ENCODE measurements at regions of chr2 and their contacts with region 1.

Region 1: GRCh38 chr2:88669371-88670214 is 21.9 kb upstream of the RPIA start:
- DNase-seq: peak; percentile 31
- ATAC-seq: peak; percentile 74
- H3K4me3 ChIP-seq: no peak overlapping the region
- H3K27ac ChIP-seq: no peak overlapping the region
- H3K4me1 ChIP-seq: peaks cover 9 to 11% of the 10 kb centered on the region in 2 experiments
- H3K27me3 ChIP-seq: no peaks in the 10 kb centered on the region
- CTCF ChIP-seq: peak; percentile 67 to 76 (median 69)
- POLR2A ChIP-seq: no peak
- RAD21 ChIP-seq: peak; percentile 83

Region 2: DNA sequence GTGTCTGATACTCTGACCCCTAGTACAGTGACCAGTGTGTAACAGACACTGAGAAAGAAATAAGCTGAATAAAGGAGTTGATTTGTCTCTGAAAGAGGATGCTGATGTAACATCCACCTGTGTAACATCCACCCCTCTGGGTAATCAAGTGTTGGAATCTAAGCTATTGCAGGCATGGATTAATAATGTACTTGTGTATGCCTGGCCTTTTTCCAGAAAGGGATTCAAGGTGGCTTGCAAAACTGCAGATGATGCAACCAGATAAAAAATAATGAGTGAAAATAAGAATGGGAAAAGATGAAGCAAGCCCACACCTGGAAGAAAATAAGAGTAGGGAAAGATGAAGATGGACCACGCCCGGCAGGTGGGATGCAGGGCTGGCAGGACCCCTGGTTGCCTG is 168.9 kb before region 1 on chr2:
- CTCF ChIA-PET with region 1: no interaction called
- POLR2A ChIA-PET with region 1: no interaction called
- RAD21 ChIA-PET with region 1: no interaction called
- intact Hi-C with region 1: no loop called
- DNase-seq: no peak
- ATAC-seq: no peak
- H3K4me3 ChIP-seq: no peak overlapping the region
- H3K27ac ChIP-seq: no peak overlapping the region
- H3K4me1 ChIP-seq: no peaks in the 10 kb centered on the region
- H3K27me3 ChIP-seq: no peaks in the 10 kb centered on the region
- CTCF ChIP-seq: no peak
- POLR2A ChIP-seq: no peak
- RAD21 ChIP-seq: no peak

Region 3: DNA sequence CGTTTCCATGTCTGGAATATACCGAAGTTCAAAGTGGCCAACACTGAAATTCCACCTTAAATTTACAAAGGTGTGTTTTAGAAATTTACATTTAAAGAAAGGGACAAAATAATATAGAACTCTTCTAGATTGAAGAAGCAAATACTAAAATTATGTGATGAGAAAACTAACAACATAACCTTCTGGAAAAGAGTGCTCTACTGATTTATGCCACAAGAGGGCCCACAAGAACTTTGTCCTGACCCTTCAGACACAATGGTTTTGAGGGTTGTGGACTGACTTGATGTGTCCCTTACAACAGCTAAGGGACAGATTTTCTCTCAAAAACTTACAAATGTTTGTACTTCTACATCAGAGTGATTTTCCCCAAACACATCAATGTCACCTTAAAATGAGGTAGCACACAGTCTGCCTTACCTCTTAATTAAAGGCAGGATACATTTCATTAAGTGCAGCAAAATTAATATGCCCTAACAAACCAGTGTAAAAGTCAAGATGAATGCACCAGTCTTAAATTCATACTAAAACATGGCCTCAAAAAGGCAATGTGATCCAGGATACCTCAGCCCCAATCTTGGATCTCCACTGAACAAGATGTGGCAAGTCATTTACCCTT is 78.5 kb before region 1 on chr2:
- CTCF ChIA-PET with region 1: interaction called, 15 read pairs
- POLR2A ChIA-PET with region 1: interaction called, 3 read pairs
- RAD21 ChIA-PET with region 1: no interaction called
- intact Hi-C with region 1: loop called (anchors 1 kb)
- DNase-seq: peak; percentile 41
- ATAC-seq: peak; percentile 86
- H3K4me3 ChIP-seq: no peak overlapping the region
- H3K27ac ChIP-seq: no peak overlapping the region
- H3K4me1 ChIP-seq: no peaks in the 10 kb centered on the region
- H3K27me3 ChIP-seq: no peaks in the 10 kb centered on the region
- CTCF ChIP-seq: peak; percentile 68 to 83 (median 78)
- POLR2A ChIP-seq: no peak
- RAD21 ChIP-seq: peak; percentile 87

Region 4: DNA sequence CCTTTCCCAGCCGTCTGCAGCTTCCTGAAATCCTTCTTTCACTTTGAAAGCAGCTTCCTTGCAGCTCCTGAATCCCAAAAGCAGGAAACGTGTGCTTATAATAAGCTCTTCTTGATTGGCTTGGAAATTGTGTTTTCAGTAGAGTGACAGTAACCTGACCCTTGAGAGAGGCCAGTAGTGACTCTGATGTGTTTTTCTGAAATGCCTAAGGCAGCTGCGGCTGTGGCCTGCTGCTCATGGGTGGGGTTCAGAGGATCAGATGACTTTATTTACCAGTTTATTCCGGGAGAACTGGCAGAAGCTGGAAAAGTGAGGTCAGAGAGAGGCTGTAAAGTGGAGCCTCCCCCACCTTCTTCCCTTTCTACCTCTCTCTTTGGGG is 10.1 kb before region 1 on chr2:
- CTCF ChIA-PET with region 1: interaction called, 12 read pairs
- POLR2A ChIA-PET with region 1: no interaction called
- RAD21 ChIA-PET with region 1: no interaction called
- intact Hi-C with region 1: no loop called
- DNase-seq: no peak
- ATAC-seq: peak; percentile 59
- H3K4me3 ChIP-seq: no peak overlapping the region
- H3K27ac ChIP-seq: no peak overlapping the region
- H3K4me1 ChIP-seq: peaks cover 0 to 11% of the 10 kb centered on the region in 2 experiments; a peak in 1 of 4 replicates
- H3K27me3 ChIP-seq: no peaks in the 10 kb centered on the region
- CTCF ChIP-seq: no peak
- POLR2A ChIP-seq: no peak
- RAD21 ChIP-seq: no peak

Region 5: GRCh38 chr2:88747990-88748389 is 78.4 kb after region 1 on chr2:
- CTCF ChIA-PET with region 1: no interaction called
- POLR2A ChIA-PET with region 1: no interaction called
- RAD21 ChIA-PET with region 1: no interaction called
- intact Hi-C with region 1: no loop called
- DNase-seq: no peak
- ATAC-seq: no peak
- H3K4me3 ChIP-seq: no peak overlapping the region
- H3K27ac ChIP-seq: no peak overlapping the region
- H3K4me1 ChIP-seq: no peaks in the 10 kb centered on the region
- H3K27me3 ChIP-seq: no peaks in the 10 kb centered on the region
- CTCF ChIP-seq: no peak
- POLR2A ChIP-seq: no peak
- RAD21 ChIP-seq: no peak

Measured in HCT116 (cell line).